Calu3 (cell line): ENCODE measurements at regions of chr13 and their contacts with region 1.

Region 1: DNA sequence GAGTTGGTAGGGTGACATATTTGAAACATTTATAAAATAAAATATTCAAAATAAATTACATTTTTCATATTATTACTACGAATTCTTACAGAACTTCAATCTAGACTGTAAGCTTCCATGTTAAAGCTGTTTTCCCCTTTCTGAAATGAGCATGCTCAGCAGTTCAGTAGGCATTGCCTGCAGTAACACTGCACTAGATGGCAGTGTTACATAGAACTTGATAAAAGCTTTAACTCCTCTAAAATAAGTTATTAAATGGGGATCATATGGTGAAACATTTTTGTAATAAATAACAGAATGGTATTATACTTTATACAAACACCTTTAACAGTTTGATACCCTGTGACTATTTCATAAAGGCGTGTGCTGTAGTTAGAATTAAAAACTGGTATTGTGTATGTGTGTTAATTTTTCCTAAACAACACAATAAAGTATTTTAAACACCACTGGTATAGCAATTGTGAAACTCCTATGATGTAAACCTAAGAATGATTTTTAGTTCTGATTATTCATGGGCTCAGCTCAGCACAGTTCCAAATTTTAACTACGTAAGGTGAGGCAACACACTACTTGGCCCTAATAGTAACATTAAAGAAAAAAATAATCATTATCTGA is 11.6 kb upstream of the GPR18 start:
- DNase-seq: no peak
- H3K4me3 Mint-ChIP-seq: no peak overlapping the region
- H3K27ac Mint-ChIP-seq: no peak overlapping the region
- H3K4me1 Mint-ChIP-seq: no peaks in the 10 kb centered on the region
- H3K27me3 Mint-ChIP-seq: no peaks in the 10 kb centered on the region
- CTCF ChIP-seq: no peak

Region 2: DNA sequence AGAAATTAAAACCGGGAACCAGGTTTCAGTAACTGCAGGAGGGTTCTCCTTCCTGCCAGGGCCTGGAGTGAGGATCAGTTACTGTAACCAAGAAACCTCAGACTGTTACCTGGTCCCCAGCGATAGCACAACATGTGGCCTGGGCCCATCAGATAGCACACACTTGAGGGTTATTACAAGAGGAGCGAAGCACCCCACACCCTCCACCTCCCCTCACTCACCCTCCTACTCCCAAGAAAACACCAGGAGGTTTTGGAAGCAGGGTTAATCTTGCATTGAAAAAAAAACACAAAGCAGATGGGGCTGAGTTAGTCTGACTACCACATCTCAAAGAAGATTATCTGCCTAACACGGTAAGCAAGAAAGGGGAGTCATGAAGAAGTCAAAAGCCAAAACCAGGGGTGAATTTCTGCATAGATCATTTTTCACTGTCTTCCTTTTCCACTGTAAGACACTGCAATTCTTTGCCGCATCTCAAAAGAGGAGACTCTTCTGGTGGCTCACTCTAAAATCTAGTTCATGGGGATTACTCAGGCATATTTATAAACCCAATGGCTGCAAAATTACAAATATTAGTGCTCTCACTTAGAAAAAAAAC is 216.0 kb before region 1 on chr13:
- CTCF ChIA-PET with region 1: no interaction called
- intact Hi-C with region 1: no loop called
- DNase-seq: no peak
- H3K4me3 Mint-ChIP-seq: no peak overlapping the region
- H3K27ac Mint-ChIP-seq: no peak overlapping the region
- H3K4me1 Mint-ChIP-seq: no peaks in the 10 kb centered on the region
- H3K27me3 Mint-ChIP-seq: no peaks in the 10 kb centered on the region
- CTCF ChIP-seq: no peak

Region 3: DNA sequence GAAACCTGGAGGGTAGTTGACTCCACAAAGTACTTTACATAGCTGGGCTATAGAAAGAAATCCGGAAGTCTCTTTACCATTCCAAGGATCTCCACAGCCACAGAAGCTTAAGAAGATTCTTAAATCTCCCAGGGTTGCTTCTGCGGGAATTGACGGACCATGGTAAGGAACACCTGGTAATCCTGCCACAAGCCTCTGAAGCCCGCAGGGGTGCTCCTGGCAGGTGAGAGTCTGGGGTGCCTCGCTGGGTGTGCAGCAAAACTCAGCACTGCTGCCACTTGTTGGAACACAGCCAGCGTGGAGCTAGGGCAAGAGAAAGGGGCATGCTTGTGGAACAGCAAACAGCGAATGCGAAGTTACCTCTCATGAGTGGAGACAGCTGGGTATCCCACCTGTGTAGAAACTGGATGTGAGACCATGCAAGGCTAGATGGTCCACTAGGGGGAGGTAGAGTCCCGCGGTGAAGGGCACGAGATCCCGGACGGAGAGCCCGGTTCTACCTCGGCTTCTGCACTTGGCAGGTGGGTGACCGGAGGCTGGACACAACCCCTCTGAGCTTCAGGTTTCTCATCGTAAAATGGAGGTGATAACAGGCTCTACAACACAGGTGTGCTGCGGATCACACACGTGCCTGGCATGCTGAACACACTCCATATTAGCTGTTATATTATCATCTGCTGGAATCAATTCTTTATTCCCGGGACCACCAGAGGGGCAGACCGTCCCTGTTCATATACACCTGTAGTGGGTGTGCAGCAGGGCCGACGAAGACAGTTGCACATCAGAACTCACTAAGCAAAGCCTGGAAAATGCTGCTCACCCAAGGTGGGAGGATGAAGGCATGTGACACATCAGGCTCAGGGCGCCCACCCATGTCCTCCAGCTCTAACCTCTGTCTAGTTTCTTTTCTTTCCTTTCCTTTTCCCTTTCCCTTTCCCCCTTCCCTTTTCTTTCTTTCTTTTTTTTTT is 93.1 kb before region 1 on chr13:
- CTCF ChIA-PET with region 1: interaction called, 14 read pairs
- intact Hi-C with region 1: loop called (anchors 1 kb)
- DNase-seq: peak; percentile 66
- H3K4me3 Mint-ChIP-seq: no peak overlapping the region
- H3K27ac Mint-ChIP-seq: no peak overlapping the region
- H3K4me1 Mint-ChIP-seq: no peaks in the 10 kb centered on the region
- H3K27me3 Mint-ChIP-seq: no peaks in the 10 kb centered on the region
- CTCF ChIP-seq: peak; percentile 45

Region 4: GRCh38 chr13:99199541-99200431 is 69.9 kb before region 1 on chr13:
- CTCF ChIA-PET with region 1: interaction called, 3 read pairs
- intact Hi-C with region 1: loop called (anchors 5 kb)
- DNase-seq: no peak
- H3K4me3 Mint-ChIP-seq: peak overlapping the region; percentile 82
- H3K27ac Mint-ChIP-seq: peak overlapping the region; percentile 77
- H3K4me1 Mint-ChIP-seq: peaks cover 9% of the 10 kb centered on the region
- H3K27me3 Mint-ChIP-seq: no peaks in the 10 kb centered on the region
- CTCF ChIP-seq: no peak